IMR-90 (cell line): ENCODE measurements at regions of chr10 and their contacts with region 1.

Region 1: GRCh38 chr10:79178614-79179163 is 109.9 kb downstream of the ZMIZ1 start:
- DNase-seq: peak; percentile 93
- ATAC-seq: peak; percentile 74
- H3K4me3 ChIP-seq: no peak overlapping the region
- H3K27ac ChIP-seq: peak overlapping the region; percentile 79
- H3K4me1 ChIP-seq: peaks cover 82% of the 10 kb centered on the region
- H3K27me3 ChIP-seq: no peaks in the 10 kb centered on the region
- CTCF ChIP-seq: 0 out of 2 replicates have a peak, but pooled peaks have one; percentile 5
- POLR2A ChIP-seq: no peak
- RAD21 ChIP-seq: peak; percentile 26

Region 2: GRCh38 chr10:79159141-79159651 is 19.5 kb before region 1 on chr10:
- CTCF ChIA-PET with region 1: no interaction called
- POLR2A ChIA-PET with region 1: no interaction called
- dilution Hi-C with region 1: no loop called
- in situ Hi-C with region 1: no loop called
- intact Hi-C with region 1: loop called (anchors 2 kb)
- DNase-seq: peak; percentile 83
- ATAC-seq: peak; percentile 68
- H3K4me3 ChIP-seq: no peak overlapping the region
- H3K27ac ChIP-seq: peak overlapping the region; percentile 93
- H3K4me1 ChIP-seq: peaks cover 74% of the 10 kb centered on the region
- H3K27me3 ChIP-seq: no peaks in the 10 kb centered on the region
- CTCF ChIP-seq: no peak
- POLR2A ChIP-seq: peak; percentile 27; the same call in 1 of the 2 replicates
- RAD21 ChIP-seq: peak; percentile 24